ENCODE measurements at regions of chr4 and their contacts with region 1.

Region 1: DNA sequence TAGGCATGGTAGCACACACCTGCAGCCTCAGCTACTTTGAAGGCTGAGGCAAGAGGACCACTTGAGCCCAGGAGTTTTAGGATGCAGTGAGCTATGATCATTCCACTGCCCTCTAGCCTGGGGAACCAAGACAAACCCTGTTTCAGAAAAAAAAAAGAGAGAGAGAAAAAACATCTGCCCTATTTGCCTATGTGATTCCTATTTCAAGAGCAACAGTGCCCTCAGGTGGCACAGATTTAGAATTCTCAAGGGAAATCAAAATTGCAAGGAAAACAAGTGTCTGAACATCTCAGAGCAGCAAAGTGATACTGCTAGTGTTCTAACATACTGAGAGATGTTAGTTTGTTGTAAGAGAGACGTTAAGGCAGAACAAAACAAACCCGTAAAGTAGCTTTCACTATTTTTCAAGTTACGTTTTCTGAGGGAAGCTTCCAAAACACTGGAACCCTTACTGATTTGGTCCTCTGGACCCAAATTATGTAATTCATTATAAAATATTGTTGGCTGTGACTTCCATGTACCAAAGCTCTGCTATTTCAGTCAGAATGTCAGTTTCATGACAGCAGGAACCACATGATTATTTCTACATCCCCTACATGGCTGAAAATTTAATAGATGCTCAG is 7.9 kb downstream of the BDH2 start:
- DNase-seq: peak; percentile 75
- ATAC-seq: peak; percentile 77
- H3K4me3 Mint-ChIP-seq: peak overlapping the region; percentile 67
- H3K27ac Mint-ChIP-seq: peak overlapping the region; percentile 77
- H3K4me1 Mint-ChIP-seq: peaks cover 26% of the 10 kb centered on the region
- H3K27me3 Mint-ChIP-seq: no peaks in the 10 kb centered on the region

Region 2: DNA sequence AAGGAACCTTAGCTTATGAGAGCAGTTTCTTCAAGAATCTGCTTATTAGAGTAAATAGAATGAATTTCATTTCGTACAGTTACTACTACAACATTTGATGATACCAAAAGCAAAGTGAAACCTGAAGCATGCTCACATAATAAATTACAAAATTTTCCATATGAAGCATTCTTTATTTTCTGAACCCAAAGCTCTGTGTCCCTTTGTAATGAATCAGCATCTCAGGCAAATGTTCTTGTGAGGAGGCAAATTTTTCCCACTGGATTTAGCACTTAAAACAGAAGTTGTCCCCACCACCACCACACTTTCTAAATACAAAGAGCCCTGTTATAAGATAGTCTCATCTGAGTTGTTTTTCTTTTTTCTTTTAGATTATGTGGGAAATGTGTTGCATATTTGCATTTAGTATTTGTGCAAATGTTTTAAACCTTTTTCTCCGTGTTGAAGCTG is 661.2 kb before region 1 on chr4:
- CTCF ChIA-PET with region 1: interaction called, 10 read pairs
- POLR2A ChIA-PET with region 1: no interaction called
- DNase-seq: no peak
- ATAC-seq: peak; percentile 4
- H3K4me3 Mint-ChIP-seq: peak overlapping the region; percentile 88
- H3K27ac Mint-ChIP-seq: peak overlapping the region; percentile 89
- H3K4me1 Mint-ChIP-seq: peaks cover 15% of the 10 kb centered on the region
- H3K27me3 Mint-ChIP-seq: peaks cover 2% of the 10 kb centered on the region

Region 3: GRCh38 chr4:103008875-103009729 is 82.6 kb before region 1 on chr4:
- CTCF ChIA-PET with region 1: interaction called, 12 read pairs
- POLR2A ChIA-PET with region 1: no interaction called
- DNase-seq: peak; percentile 55
- ATAC-seq: peak; percentile 96
- H3K4me3 Mint-ChIP-seq: no peak overlapping the region
- H3K27ac Mint-ChIP-seq: no peak overlapping the region
- H3K4me1 Mint-ChIP-seq: no peaks in the 10 kb centered on the region
- H3K27me3 Mint-ChIP-seq: peaks cover 8% of the 10 kb centered on the region

Region 4: GRCh38 chr4:103032574-103032973 is 59.1 kb before region 1 on chr4:
- CTCF ChIA-PET with region 1: interaction called, 11 read pairs
- POLR2A ChIA-PET with region 1: no interaction called
- DNase-seq: peak; percentile 43
- ATAC-seq: peak; percentile 85
- H3K4me3 Mint-ChIP-seq: no peak overlapping the region
- H3K27ac Mint-ChIP-seq: peak overlapping the region; percentile 18
- H3K4me1 Mint-ChIP-seq: peaks cover 18% of the 10 kb centered on the region
- H3K27me3 Mint-ChIP-seq: no peaks in the 10 kb centered on the region

Region 5: GRCh38 chr4:103075901-103076739 is 15.6 kb before region 1 on chr4:
- CTCF ChIA-PET with region 1: interaction called, 115 read pairs
- POLR2A ChIA-PET with region 1: interaction called, 3 read pairs
- DNase-seq: peak; percentile 74
- ATAC-seq: peak; percentile 79
- H3K4me3 Mint-ChIP-seq: peak overlapping the region; percentile 98
- H3K27ac Mint-ChIP-seq: peak overlapping the region; percentile 99
- H3K4me1 Mint-ChIP-seq: peaks cover 48% of the 10 kb centered on the region
- H3K27me3 Mint-ChIP-seq: no peaks in the 10 kb centered on the region

Region 6: DNA sequence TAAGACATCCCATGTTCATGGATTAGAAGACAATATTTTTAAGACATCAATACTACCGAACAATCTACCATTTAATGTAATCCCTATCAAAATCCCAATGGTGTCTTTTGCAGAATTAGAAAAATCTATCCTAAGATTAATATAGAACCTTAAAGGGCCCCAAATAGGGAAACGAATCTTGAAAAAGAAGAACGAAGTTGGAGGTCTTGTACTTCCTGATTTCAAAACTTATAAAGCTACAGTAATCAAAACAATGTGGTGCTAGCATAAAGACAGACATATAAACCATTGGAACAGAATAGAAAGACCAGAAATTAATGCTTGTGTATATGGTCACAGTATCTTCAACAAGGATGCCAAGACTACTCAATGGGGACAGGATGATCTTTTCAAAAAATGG is 64.4 kb after region 1 on chr4:
- CTCF ChIA-PET with region 1: no interaction called
- POLR2A ChIA-PET with region 1: no interaction called
- DNase-seq: no peak
- ATAC-seq: no peak
- H3K4me3 Mint-ChIP-seq: no peak overlapping the region
- H3K27ac Mint-ChIP-seq: no peak overlapping the region
- H3K4me1 Mint-ChIP-seq: peaks cover 3% of the 10 kb centered on the region
- H3K27me3 Mint-ChIP-seq: no peaks in the 10 kb centered on the region